IMR-90 (cell line): ENCODE measurements at regions of chr6 and their contacts with region 1.

Region 1: GRCh38 chr6:72411872-72412708 is 209.8 kb upstream of the KCNQ5 start:
- DNase-seq: peak; percentile 81
- ATAC-seq: peak; percentile 95
- H3K4me3 ChIP-seq: no peak overlapping the region
- H3K27ac ChIP-seq: no peak overlapping the region
- H3K4me1 ChIP-seq: peaks cover 2% of the 10 kb centered on the region; the same call in 1 of the 2 replicates
- H3K27me3 ChIP-seq: no peaks in the 10 kb centered on the region
- CTCF ChIP-seq: peak; percentile 100; the same call in 1 of the 2 replicates
- POLR2A ChIP-seq: peak; percentile 76; the same call in 1 of the 2 replicates
- RAD21 ChIP-seq: peak; percentile 100

Region 2: GRCh38 chr6:72140795-72141194 is 271.3 kb before region 1 on chr6:
- CTCF ChIA-PET with region 1: no interaction called
- POLR2A ChIA-PET with region 1: no interaction called
- dilution Hi-C with region 1: no loop called
- in situ Hi-C with region 1: no loop called
- intact Hi-C with region 1: loop called (anchors 1 kb)
- DNase-seq: peak; percentile 38
- ATAC-seq: peak; percentile 66
- H3K4me3 ChIP-seq: no peak overlapping the region
- H3K27ac ChIP-seq: no peak overlapping the region
- H3K4me1 ChIP-seq: no peaks in the 10 kb centered on the region; the same call in 1 of the 2 replicates
- H3K27me3 ChIP-seq: no peaks in the 10 kb centered on the region
- CTCF ChIP-seq: peak; percentile 37
- POLR2A ChIP-seq: no peak
- RAD21 ChIP-seq: peak; percentile 29; the same call in 1 of the 2 replicates

Region 3: GRCh38 chr6:72580281-72580940 is 168.3 kb after region 1 on chr6:
- CTCF ChIA-PET with region 1: interaction called, 47 read pairs
- POLR2A ChIA-PET with region 1: no interaction called
- dilution Hi-C with region 1: no loop called
- in situ Hi-C with region 1: loop called (anchors 5 kb)
- intact Hi-C with region 1: loop called (anchors 5 kb)
- DNase-seq: peak; percentile 88
- ATAC-seq: peak; percentile 95
- H3K4me3 ChIP-seq: no peak overlapping the region
- H3K27ac ChIP-seq: no peak overlapping the region
- H3K4me1 ChIP-seq: no peaks in the 10 kb centered on the region
- H3K27me3 ChIP-seq: no peaks in the 10 kb centered on the region
- CTCF ChIP-seq: peak; percentile 89
- POLR2A ChIP-seq: 0 out of 2 replicates have a peak, but pooled peaks have one; percentile 36
- RAD21 ChIP-seq: peak; percentile 91

Region 4: GRCh38 chr6:73129653-73130443 is 717.8 kb after region 1 on chr6:
- CTCF ChIA-PET with region 1: interaction called, 4 read pairs
- POLR2A ChIA-PET with region 1: no interaction called
- dilution Hi-C with region 1: no loop called
- in situ Hi-C with region 1: loop called (anchors 5 kb)
- intact Hi-C with region 1: loop called (anchors 1 kb)
- DNase-seq: peak; percentile 66
- ATAC-seq: peak; percentile 95
- H3K4me3 ChIP-seq: no peak overlapping the region
- H3K27ac ChIP-seq: no peak overlapping the region
- H3K4me1 ChIP-seq: peaks cover 8% of the 10 kb centered on the region
- H3K27me3 ChIP-seq: no peaks in the 10 kb centered on the region
- CTCF ChIP-seq: peak; percentile 97
- POLR2A ChIP-seq: peak; percentile 60; the same call in 1 of the 2 replicates
- RAD21 ChIP-seq: peak; percentile 98

Region 5: GRCh38 chr6:73329201-73329600 is 917.1 kb after region 1 on chr6:
- CTCF ChIA-PET with region 1: no interaction called
- POLR2A ChIA-PET with region 1: no interaction called
- dilution Hi-C with region 1: no loop called
- in situ Hi-C with region 1: loop called (anchors 25 kb)
- intact Hi-C with region 1: loop called (anchors 5 kb)
- DNase-seq: no peak
- ATAC-seq: no peak
- H3K4me3 ChIP-seq: no peak overlapping the region
- H3K27ac ChIP-seq: no peak overlapping the region
- H3K4me1 ChIP-seq: no peaks in the 10 kb centered on the region
- H3K27me3 ChIP-seq: peaks cover 9% of the 10 kb centered on the region
- CTCF ChIP-seq: no peak
- POLR2A ChIP-seq: no peak
- RAD21 ChIP-seq: no peak